HAP-1 (cell line): ENCODE measurements at regions of chr1 and their contacts with region 1.

Region 1: DNA sequence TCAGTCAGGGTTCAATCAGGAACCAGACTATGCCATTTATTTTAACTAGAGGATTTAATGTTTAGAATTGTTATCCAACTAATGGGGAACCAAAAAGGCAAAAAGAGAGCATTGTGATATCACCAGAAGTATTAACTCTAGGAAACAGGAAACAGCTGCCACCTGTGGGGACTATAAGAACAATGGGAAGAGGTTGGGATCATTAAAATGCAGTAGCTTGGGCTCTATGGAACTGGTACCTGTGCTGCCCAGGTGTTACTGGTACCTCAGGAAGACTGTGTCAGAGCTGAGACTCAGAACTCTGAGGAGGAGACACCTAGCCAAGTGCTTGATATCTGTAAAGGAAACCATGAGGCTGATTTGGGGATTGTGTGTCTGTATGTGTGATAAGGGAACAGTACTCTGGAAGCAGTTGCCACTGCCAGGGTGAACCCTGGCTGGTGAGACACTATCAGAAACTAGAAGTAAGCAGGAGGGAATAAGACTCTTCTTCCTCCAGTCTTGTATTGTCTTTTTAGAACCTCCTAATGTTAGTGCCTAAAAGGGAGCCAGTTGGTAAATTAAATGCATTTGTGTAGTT is 49.4 kb downstream of the MAN1A2 start:
- DNase-seq: no peak
- H3K4me3 ChIP-seq: no peak overlapping the region
- H3K4me1 ChIP-seq: no peaks in the 10 kb centered on the region
- H3K27me3 ChIP-seq: no peaks in the 10 kb centered on the region

Region 2: DNA sequence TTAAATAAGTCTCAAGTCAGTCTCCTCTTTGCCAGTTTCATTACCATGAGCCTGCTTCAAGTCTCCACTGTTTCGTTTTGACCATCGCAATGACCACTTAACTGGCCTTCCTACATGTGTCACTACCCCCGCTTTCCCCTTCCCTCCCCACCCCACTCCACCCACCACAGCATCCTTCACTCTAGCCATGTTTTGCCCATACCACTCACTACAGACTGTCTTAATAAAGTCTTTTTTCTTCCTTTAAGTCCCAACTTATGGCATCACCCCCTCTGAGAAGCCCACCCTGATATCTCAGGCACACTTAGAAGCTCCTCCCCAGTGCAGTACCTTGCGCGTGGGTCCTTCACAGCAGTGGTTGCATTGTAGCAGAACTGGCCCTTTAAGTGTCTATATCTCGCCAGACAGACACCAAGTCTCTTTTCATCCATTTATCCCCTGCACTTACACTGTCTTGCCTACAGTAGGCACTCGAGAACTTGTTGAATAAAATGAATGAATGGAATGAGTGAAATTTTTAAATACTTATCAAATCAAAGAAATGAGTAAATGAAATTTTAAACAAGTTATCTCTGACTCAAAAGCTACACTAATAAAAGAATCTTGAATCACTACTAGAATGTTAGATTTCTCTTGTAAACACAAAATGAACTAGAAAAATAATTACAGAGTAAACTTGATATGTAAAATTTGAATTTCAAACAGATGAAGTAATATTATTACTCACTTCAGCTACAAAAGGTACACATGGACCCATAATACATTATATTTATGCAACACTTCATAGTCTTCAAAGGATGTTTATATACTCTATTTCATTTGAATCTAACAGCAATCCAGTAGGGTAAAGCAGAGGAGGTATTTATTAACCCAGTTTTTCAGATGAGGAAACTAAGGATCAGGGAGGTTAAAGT is 104.2 kb before region 1 on chr1:
- in situ Hi-C with region 1: loop called (anchors 25 kb)
- DNase-seq: peak in 1 of 2 experiments; percentile 12
- H3K4me3 ChIP-seq: no peak overlapping the region
- H3K4me1 ChIP-seq: no peaks in the 10 kb centered on the region
- H3K27me3 ChIP-seq: peaks cover 13% of the 10 kb centered on the region; the same call in 1 of the 2 replicates